ENCODE measurements at regions of chr18 and their contacts with region 1.

Region 1: GRCh38 chr18:68721681-68722583 is 7.0 kb upstream of the TMX3 start:
- DNase-seq: no peak
- ATAC-seq: peak; percentile 49

Region 2: DNA sequence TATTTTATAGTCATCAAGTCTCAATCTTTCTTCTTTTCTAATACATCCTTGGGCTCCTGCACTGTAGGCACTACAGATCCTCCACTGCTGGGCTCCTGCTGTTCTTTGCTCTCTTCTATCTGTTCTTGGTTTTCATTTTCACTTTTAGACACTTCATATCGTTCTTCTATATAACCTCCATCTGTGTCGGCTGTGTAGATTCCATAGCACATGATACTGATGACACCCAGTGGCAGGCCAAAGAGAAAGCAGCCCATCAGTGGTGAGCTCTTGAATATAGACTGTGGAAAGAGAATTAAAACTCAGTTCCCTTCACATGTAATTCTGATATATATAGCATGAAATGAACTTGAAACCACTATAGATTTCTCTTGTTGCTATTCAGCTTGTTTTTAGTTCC is 45.0 kb before region 1 on chr18:
- intact Hi-C with region 1: loop called (anchors 10 kb)
- DNase-seq: no peak
- ATAC-seq: no peak

Measured in left ventricle myocardium superior (tissue), 1 donor.